ENCODE measurements at regions of chr4 and their contacts with region 1.

Region 1: DNA sequence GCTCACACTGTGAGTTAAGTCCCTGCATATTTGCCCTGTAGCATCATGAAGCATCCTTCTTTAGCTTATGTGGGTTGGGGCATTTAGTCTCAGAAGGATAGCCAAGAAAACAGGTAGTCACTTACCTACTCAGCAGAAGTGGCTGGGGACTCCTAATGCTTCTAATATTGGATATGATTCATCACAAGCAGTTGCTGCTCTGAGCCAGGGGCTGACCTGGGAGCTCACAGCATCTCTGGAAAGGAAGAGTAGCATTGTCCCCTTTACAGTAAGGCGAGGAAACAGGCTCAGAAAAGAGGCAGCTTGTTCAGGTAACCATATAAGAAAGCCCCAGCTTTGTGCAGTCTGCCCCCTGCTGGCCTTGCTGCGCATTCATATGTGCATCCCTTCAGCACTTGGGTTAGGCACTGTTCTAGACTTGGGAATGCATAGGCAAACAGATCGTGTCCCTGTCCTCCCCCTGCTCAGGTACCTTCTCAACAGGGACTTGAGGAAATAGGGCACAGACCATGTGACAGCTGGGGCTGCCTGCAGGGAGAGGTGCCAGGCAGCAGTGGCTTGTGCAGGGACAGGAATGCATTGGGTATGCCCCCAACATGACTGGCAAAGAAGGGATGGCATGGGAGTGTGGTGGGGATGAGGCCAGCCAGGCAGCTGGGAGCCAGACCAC is 35.7 kb upstream of the TBC1D14 start:
- DNase-seq: peak; percentile 82
- H3K4me3 Mint-ChIP-seq: no peak overlapping the region
- H3K27ac Mint-ChIP-seq: no peak overlapping the region
- H3K4me1 Mint-ChIP-seq: peaks cover 4% of the 10 kb centered on the region
- H3K27me3 Mint-ChIP-seq: no peaks in the 10 kb centered on the region

Region 2: DNA sequence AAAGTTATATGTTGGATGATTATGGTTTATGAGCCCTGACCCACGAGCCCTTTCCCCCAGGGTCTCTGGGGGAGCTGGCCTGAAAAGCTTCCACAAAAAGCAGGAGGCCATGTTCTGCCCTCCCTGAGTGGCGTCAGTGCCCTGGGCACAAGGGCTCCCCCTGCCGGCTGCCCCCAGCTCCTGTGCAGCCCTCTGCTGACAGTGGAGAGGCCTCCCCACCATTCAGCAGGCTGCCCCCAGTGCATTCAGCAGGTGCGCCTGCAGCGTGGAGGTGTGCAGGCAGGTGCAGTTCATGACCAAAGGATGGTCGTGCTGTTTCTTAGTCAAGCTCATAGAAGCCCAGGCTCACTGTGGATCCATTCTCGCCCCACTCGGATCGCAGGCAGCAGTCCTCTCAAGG is 192.7 kb before region 1 on chr4:
- CTCF ChIA-PET with region 1: interaction called, 12 read pairs
- POLR2A ChIA-PET with region 1: interaction called, 20 read pairs
- DNase-seq: no peak
- H3K4me3 Mint-ChIP-seq: no peak overlapping the region
- H3K27ac Mint-ChIP-seq: no peak overlapping the region
- H3K4me1 Mint-ChIP-seq: peaks cover 46% of the 10 kb centered on the region
- H3K27me3 Mint-ChIP-seq: no peaks in the 10 kb centered on the region

Region 3: DNA sequence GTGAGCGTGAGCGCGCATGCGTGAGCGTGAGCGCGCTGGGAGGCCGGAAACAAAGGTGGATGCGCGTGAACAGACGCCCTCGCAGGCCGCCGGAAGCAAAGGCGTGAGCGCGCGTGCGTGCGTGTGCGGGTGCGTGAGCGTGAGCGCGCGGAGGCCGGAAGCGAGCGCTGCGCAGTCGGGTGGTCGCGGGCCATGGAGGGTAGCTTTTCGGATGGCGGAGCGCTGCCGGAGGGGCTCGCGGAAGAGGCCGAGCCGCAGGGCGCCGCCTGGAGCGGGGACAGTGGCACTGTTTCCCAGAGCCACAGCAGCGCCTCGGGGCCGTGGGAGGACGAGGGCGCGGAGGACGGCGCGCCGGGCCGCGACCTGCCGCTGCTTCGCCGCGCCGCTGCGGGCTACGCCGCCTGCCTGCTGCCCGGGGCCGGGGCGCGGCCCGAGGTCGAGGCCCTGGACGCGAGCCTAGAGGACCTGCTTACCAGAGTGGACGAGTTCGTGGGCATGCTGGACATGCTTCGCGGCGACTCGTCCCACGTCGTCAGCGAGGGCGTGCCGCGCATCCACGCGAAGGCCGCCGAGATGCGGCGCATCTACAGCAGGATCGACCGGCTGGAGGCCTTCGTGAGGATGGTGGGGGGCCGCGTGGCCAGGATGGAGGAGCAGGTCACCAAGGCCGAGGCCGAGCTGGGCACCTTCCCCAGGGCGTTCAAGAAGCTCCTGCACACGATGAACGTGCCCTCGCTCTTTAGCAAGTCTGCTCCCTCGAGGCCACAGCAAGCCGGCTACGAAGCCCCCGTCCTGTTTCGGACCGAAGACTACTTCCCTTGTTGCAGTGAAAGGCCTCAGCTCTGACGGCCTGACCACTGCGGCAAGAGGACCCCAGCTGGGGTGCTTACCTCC is 157.7 kb before region 1 on chr4 and contains the start of gene BLOC1S4:
- CTCF ChIA-PET with region 1: interaction called, 145 read pairs
- POLR2A ChIA-PET with region 1: interaction called, 17 read pairs
- DNase-seq: peak; percentile 91
- H3K4me3 Mint-ChIP-seq: peak within 1 kb of the TSS; percentile 88
- H3K27ac Mint-ChIP-seq: peak within 1 kb of the TSS; percentile 87
- H3K4me1 Mint-ChIP-seq: peaks cover 36% of the 10 kb centered on the region
- H3K27me3 Mint-ChIP-seq: no peaks in the 10 kb centered on the region
- total RNA-seq, gene BLOC1S4: 22.9 to 23.2 TPM

Region 4: DNA sequence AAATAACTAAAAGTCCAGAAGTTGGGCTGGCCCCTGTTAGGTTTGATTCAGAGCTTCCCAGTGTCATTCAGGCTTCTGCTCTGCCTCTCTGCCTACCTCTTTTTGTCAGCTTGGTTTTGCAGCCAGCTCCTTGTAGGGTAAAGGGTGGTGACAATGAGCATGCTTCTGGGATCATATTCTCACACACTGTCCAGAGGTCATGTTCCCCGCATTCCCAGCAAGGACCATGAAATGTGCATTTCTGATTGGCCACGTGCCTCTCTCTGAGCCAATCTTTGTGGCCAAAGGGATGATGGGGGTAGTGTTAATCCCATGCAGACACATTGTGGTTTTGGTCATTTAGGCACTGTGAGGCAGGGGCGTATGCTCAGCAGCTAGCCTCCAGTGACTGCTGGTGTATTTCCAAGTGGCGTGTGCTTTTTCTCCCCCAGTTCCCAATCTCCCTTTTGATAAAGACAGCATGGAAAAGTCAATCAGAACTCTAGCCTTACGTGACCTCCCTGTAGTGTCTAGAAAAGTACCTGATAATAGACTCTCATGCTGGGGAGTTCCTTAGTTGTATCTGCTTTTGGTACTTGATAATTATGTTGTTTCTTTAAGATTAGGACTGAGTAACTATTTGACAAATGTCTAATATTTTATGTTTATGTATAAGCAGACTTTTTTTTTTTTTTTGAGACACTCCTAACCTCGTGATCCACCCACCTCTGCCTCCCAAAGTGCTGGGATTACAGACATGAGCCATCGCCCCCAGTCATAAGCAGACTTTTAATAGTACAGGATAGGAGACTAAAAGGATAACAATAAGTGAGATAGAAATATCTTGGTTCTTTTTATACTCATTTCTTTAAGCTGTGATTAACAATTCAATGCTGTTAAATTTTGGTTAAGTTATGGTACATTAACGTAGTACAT is 33.6 kb before region 1 on chr4:
- CTCF ChIA-PET with region 1: interaction called, 11 read pairs
- POLR2A ChIA-PET with region 1: no interaction called
- DNase-seq: no peak
- H3K4me3 Mint-ChIP-seq: no peak overlapping the region
- H3K27ac Mint-ChIP-seq: no peak overlapping the region
- H3K4me1 Mint-ChIP-seq: no peaks in the 10 kb centered on the region
- H3K27me3 Mint-ChIP-seq: no peaks in the 10 kb centered on the region

Region 5: GRCh38 chr4:6885951-6886557 is 12.1 kb after region 1 on chr4:
- CTCF ChIA-PET with region 1: interaction called, 58 read pairs
- POLR2A ChIA-PET with region 1: no interaction called
- DNase-seq: no peak
- H3K4me3 Mint-ChIP-seq: no peak overlapping the region
- H3K27ac Mint-ChIP-seq: no peak overlapping the region
- H3K4me1 Mint-ChIP-seq: peaks cover 7% of the 10 kb centered on the region
- H3K27me3 Mint-ChIP-seq: no peaks in the 10 kb centered on the region

Region 6: DNA sequence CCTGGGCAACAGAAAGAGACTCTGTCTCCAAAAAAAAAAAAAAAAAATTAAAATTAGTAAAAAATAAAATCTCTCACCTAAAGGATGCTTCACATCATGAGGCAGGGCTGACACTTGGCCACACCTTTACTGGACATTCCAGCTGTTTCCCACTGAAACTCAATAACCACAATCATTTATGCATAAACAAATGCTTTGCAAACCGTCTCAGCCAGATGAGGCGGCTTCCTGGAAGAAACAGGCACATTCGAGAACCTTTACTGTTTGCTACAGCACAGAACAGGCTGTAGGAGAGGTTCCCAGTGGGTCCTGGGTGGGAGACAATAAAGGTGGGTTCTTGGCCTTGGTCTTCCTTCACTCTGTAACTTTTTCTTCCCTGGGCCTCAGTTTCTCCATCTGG is 24.8 kb after region 1 on chr4:
- CTCF ChIA-PET with region 1: interaction called, 20 read pairs
- POLR2A ChIA-PET with region 1: interaction called, 5 read pairs
- DNase-seq: peak; percentile 39
- H3K4me3 Mint-ChIP-seq: peak overlapping the region; percentile 40
- H3K27ac Mint-ChIP-seq: peak overlapping the region; percentile 94
- H3K4me1 Mint-ChIP-seq: peaks cover 63% of the 10 kb centered on the region
- H3K27me3 Mint-ChIP-seq: no peaks in the 10 kb centered on the region

Measured in activated CD4-positive, alpha-beta memory T cell treated with anti-CD3 and anti-CD28 coated beads, Interleukin-2, amount 10 ng/mL, durations not matched to agents 7 days and 5 days (primary cell).